Heart right ventricle (tissue), 16 donors: ENCODE measurements at regions of chr3 and their contacts with region 1.

Region 1: GRCh38 chr3:133812872-133813271 is 7.3 kb downstream of the SRPRB start:
- DNase-seq: no peak
- ATAC-seq: peak in 2 of 8 donors; percentile 37 to 60
- H3K4me3 ChIP-seq: no peak overlapping the region
- H3K27ac ChIP-seq: no peak overlapping the region
- H3K4me1 ChIP-seq: peaks cover 0 to 8% (median 0%) of the 10 kb centered on the region in 9 donors
- H3K27me3 ChIP-seq: no peaks in the 10 kb centered on the region
- CTCF ChIP-seq: no peak

Region 2: GRCh38 chr3:133448478-133449122 is 364.3 kb before region 1 on chr3:
- intact Hi-C with region 1: no loop called
- DNase-seq: no peak
- ATAC-seq: no peak
- H3K4me3 ChIP-seq: no peak overlapping the region
- H3K27ac ChIP-seq: no peak overlapping the region
- H3K4me1 ChIP-seq: peaks cover 0 to 9% (median 0%) of the 10 kb centered on the region in 9 donors
- H3K27me3 ChIP-seq: no peaks in the 10 kb centered on the region
- CTCF ChIP-seq: no peak

Region 3: DNA sequence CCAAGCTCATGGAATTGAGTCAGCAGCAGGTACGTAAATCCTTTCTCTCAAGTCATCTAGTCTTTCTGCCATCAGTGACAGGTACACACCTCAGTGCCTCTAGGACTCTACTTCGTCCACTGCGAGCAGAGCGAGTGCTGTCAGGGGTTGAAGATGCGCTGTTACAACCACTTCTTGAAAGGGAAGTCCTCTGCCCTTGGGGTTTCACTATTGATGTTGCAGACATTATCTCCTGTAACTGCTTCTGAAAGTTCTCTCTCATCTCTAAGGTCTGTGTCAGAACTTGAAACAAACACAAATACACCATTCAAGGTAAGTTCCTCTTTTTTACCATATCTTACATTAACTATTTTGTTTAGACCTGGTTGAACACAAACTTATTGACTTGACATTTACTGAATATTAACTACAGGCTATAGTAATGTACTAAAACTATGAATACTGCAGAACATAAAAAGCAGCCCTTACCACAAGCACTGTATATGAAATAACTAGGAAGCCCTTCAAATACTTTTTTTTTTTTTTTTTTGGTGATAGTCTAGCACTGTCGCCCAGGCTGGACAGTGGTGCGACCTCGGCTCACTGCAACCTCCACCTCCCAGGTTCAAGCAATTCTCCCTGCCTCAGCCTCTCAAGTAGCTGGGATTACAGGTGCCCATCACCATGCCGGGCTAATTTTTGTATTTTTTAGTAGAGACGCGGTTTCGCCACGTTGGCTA is 192.6 kb before region 1 on chr3:
- intact Hi-C with region 1: no loop called
- DNase-seq: no peak
- ATAC-seq: no peak
- H3K4me3 ChIP-seq: no peak overlapping the region
- H3K27ac ChIP-seq: no peak overlapping the region
- H3K4me1 ChIP-seq: no peaks in the 10 kb centered on the region
- H3K27me3 ChIP-seq: no peaks in the 10 kb centered on the region
- CTCF ChIP-seq: no peak

Region 4: DNA sequence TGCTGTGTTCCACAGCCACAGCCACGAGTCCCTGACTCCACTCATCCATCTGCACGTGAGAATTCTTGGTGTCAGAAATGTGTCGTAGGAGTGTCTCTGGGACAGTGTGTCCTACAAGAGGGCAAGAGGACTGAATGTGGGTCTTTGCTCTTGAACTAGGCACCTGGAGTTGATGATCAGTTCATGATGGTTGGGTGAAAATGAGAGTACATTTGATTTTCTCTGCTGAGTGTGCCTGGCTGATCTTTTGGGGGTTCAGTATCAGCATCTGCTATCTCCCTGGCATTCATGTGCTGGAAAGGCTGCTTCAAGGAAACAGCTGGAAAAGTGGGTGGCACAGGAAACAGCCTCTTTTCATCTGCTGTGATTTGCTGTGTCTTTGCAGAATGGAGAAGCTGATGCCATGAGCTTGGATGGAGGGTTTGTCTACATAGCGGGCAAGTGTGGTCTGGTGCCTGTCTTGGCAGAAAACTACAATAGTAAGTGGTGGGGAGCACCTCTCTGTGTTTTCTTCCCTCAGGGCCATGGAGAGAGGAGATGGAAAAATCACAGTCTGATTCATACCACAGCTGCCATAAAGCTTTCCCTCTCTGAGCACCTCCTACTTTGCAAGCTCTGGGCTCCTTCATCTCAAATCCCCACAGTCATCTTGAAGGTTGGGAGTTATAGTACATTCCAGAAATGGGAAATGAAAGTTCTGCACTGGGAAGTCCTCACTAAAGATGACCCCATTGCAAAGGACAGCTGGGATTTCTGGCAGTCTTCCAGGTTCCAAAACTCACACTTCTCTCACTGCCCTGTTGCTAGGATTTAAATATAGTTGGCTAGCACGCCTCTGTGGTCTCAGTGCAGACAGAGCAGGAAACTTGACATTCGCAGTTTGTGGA is 48.8 kb before region 1 on chr3:
- intact Hi-C with region 1: no loop called
- DNase-seq: peak in 1 of 2 donors; percentile 68
- ATAC-seq: peak; percentile 30 to 93 (median 87)
- H3K4me3 ChIP-seq: no peak overlapping the region
- H3K27ac ChIP-seq: no peak overlapping the region
- H3K4me1 ChIP-seq: peaks cover 0 to 17% (median 8%) of the 10 kb centered on the region in 9 donors
- H3K27me3 ChIP-seq: no peaks in the 10 kb centered on the region
- CTCF ChIP-seq: no peak

Region 5: DNA sequence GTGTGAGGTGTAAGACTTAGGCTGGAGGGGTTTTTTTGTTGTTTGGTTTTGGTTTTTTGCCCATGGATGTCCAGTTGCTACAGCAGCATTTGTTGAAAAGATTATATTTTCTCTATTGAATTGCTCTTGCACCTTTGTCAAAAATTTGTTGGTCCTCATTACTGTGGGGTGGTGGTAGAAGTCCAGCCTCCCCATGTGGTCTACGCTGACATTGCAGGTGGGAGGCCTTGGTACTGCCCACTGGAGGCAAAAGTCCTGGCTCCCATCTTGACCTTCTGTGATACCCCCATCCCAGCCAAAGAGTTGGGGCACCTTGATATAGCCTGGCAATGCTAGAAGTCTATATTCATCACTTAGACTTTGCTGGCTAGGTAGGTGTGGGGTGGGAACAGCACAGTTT is 88.2 kb after region 1 on chr3:
- intact Hi-C with region 1: loop called in 4 of 10 experiments (anchors 2 to 5 kb)
- DNase-seq: no peak
- ATAC-seq: peak in 3 of 8 donors; percentile 43 to 65 (median 60)
- H3K4me3 ChIP-seq: no peak overlapping the region
- H3K27ac ChIP-seq: no peak overlapping the region
- H3K4me1 ChIP-seq: peaks cover 0 to 6% (median 4%) of the 10 kb centered on the region in 9 donors
- H3K27me3 ChIP-seq: peaks cover 0 to 24% (median 0%) of the 10 kb centered on the region in 7 donors
- CTCF ChIP-seq: peak; percentile 14 to 58 (median 53)